ENCODE measurements at regions of chr17 and their contacts with region 1.

Region 1: GRCh38 chr17:61251939-61252896 is 147.4 kb upstream of the TBX2 start:
- DNase-seq: peak; percentile 95
- H3K4me3 ChIP-seq: peak overlapping the region in 1 of 4 donors; percentile 3
- H3K27ac ChIP-seq: peak overlapping the region; percentile 46 to 85 (median 62)
- H3K4me1 ChIP-seq: peaks cover 0 to 31% (median 30%) of the 10 kb centered on the region in 4 donors
- H3K27me3 ChIP-seq: peaks cover 0 to 26% (median 0%) of the 10 kb centered on the region in 3 donors
- CTCF ChIP-seq: no peak
- EP300 ChIP-seq: peak in 2 of 4 donors; percentile 24 to 31
- POLR2A ChIP-seq: no peak

Region 2: DNA sequence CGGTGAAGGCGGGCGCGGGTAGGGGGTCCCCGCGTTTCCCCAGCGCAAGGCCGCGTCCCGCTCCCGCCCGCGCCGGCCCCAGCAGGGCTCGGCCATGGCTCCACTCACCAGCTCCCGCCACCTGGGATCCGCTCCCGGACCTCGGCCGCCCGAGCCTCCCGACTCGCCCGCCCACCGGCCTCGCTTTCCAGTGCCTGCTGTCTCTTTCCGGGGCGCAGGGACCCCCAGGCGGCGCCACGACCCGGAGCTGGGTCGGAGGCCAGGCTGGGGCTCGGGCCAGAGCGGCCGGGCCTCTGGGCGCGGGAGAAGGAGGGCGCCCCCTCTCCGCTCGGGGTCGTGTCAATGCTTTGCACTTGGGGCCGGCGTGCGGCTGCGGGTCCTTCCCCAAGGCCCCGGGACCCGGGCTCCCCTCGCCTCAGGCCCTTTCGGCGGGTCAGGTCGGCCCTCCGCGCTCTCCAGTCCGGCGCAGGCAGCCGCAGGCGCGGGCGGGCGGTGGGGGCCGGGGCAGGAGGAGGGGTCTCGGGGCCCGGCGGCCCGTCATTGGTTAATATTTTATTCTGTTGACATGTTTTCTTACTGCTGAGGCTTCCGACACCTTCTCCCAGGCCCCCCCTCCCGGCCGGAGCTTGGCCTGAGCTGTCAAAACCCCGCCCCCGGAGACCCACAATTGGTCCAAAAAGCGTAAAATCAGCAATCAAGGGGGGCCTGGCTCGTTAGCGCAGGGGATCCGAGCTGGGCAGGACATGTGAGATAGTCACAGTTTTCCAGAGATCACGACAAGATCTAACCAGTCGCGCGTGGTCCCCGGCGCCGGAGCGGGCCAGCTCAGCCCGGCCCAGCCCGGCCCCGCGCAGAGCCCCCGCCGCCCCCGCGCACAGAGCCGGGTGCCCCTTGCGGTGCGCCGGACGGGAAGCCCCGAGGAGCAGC is 147.2 kb after region 1 on chr17 and contains the start of gene TBX2:
- intact Hi-C with region 1: loop called (anchors 5 kb)
- DNase-seq: peak; percentile 78
- H3K4me3 ChIP-seq: peak within 1 kb of the TSS; percentile 23 to 46 (median 40)
- H3K27ac ChIP-seq: peak within 1 kb of the TSS; percentile 46 to 92 (median 51)
- H3K4me1 ChIP-seq: peaks cover 0 to 68% (median 63%) of the 10 kb centered on the region in 4 donors
- H3K27me3 ChIP-seq: peaks cover 77 to 97% (median 90%) of the 10 kb centered on the region in 3 donors
- CTCF ChIP-seq: no peak
- EP300 ChIP-seq: no peak
- POLR2A ChIP-seq: no peak
- total RNA-seq, gene TBX2: 0.99 to 5.3 (median 2.3) TPM